ENCODE measurements at regions of chr5 and their contacts with region 1.

Region 1: GRCh38 chr5:39948867-39949468 is 524.2 kb upstream of the DAB2 start:
- DNase-seq: peak; percentile 72
- H3K4me3 ChIP-seq: no peak overlapping the region
- H3K27ac ChIP-seq: no peak overlapping the region
- H3K4me1 ChIP-seq: no peaks in the 10 kb centered on the region
- H3K27me3 ChIP-seq: no peaks in the 10 kb centered on the region
- CTCF ChIP-seq: peak; percentile 60

Region 2: GRCh38 chr5:39714036-39714698 is 234.8 kb before region 1 on chr5:
- intact Hi-C with region 1: loop called (anchors 10 kb)
- DNase-seq: peak; percentile 70
- H3K4me3 ChIP-seq: no peak overlapping the region
- H3K27ac ChIP-seq: no peak overlapping the region
- H3K4me1 ChIP-seq: no peaks in the 10 kb centered on the region
- H3K27me3 ChIP-seq: no peaks in the 10 kb centered on the region
- CTCF ChIP-seq: peak; percentile 72

Region 3: GRCh38 chr5:39835371-39835770 is 113.6 kb before region 1 on chr5:
- intact Hi-C with region 1: no loop called
- DNase-seq: no peak
- H3K4me3 ChIP-seq: no peak overlapping the region
- H3K27ac ChIP-seq: no peak overlapping the region
- H3K4me1 ChIP-seq: no peaks in the 10 kb centered on the region
- H3K27me3 ChIP-seq: no peaks in the 10 kb centered on the region
- CTCF ChIP-seq: no peak

Region 4: DNA sequence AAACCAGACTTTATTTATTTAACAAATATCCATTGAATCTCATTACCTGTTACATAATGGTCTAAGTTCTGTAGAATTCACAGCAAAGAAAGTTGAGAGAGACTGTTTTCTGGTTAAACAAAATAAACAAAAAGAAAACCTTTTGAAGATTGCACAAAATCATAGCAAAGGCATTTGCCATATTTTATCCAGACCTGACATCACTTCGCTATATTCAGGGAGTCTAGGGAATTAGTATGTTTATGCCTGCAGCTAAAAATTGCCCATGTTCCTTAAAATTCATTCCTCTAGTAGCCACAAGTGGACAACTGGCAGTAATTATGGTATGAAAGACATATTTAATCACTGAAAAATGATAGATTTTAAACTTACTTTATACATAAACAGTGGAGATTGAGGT is 52.8 kb after region 1 on chr5:
- intact Hi-C with region 1: no loop called
- DNase-seq: no peak
- H3K4me3 ChIP-seq: no peak overlapping the region
- H3K27ac ChIP-seq: no peak overlapping the region
- H3K4me1 ChIP-seq: no peaks in the 10 kb centered on the region
- H3K27me3 ChIP-seq: no peaks in the 10 kb centered on the region
- CTCF ChIP-seq: no peak

Region 5: DNA sequence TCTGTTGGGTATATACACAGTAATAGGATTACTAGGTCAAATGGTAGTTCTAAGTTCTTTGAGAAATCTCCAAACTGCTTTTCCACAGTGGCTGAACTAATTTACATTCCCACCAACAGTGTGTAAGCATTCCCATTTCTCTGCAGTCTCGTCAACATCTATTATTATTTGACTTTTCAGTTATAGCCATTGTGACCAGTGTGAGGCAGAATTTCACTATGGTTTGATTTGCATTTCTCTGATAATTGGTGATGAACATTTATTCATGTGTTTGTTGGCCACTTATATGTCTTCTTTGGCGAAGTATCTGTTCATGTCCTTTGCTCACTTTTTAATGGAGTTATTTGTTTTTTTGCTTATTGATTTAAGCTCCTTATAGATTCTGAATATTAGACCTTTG is 72.0 kb after region 1 on chr5:
- intact Hi-C with region 1: no loop called
- DNase-seq: no peak
- H3K4me3 ChIP-seq: no peak overlapping the region
- H3K27ac ChIP-seq: no peak overlapping the region
- H3K4me1 ChIP-seq: no peaks in the 10 kb centered on the region
- H3K27me3 ChIP-seq: no peaks in the 10 kb centered on the region
- CTCF ChIP-seq: no peak

Region 6: DNA sequence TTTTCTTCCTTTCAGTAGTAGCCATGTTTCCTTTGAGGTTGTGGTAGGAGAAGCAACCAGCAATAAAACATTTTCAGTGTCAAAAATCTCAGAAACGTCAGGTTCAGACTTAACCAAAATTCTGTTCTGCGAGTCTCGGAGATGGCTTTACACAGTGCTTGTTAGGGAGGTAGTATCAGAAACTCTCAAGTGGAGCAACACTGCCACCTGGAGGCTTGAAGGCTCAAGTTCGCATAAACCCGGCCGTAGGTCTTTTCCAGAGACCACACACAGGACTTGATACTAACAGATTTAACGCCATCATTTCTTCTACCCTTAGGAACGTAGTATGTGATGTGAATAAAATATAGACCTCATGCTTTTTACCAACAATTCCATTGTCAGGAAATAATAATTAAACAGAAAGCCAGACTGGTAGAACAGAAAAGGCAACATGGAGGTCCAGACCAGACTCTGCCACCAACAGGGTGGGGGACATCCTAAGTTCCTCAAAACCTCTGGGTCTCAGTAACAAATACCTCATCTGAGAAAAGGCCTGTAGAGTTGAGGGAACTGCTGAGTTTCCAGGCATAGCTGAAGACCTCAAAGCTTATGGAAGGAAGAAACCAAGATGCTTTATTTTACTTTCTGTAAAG is 739.3 kb after region 1 on chr5:
- intact Hi-C with region 1: loop called (anchors 5 kb)
- DNase-seq: peak; percentile 91
- H3K4me3 ChIP-seq: no peak overlapping the region
- H3K27ac ChIP-seq: peak overlapping the region; percentile 18
- H3K4me1 ChIP-seq: peaks cover 6% of the 10 kb centered on the region
- H3K27me3 ChIP-seq: no peaks in the 10 kb centered on the region
- CTCF ChIP-seq: peak; percentile 74

Region 7: DNA sequence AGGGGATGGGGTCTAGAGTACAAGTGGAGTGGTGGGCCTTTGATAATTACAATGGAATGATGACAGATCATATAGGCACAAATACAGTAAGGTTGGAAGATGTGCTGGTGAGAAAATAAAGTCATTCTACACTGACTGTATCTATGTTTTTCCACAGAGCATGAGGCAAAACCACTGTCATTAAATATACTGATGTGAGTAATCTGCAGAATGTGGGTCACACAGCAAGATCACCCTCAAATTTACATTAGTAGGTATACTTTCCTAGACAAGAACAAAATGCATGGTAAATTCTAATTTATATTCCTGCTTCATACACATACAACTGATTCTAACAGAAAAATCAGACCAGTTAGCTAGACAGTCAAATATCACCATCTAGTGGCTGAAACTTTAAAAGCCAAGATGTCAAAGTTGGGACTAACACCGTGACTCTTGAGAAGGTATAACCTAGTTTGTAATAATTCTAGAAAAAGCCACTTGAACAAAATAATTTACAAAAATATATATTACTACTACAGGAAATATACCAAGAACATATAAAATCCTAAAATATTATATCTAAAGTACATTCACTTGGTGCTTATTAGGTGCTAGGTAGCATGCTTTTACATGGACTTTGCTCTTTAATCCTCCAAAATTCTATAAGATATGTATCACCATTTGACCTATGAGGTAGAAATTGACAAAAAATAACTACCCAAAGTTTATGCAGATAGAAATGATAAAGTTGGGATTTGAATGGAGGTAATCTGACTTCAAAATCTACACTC is 787.3 kb after region 1 on chr5:
- intact Hi-C with region 1: loop called (anchors 5 kb)
- DNase-seq: no peak
- H3K4me3 ChIP-seq: no peak overlapping the region
- H3K27ac ChIP-seq: no peak overlapping the region
- H3K4me1 ChIP-seq: peaks cover 11% of the 10 kb centered on the region
- H3K27me3 ChIP-seq: no peaks in the 10 kb centered on the region
- CTCF ChIP-seq: peak; percentile 70

Measured in colonic mucosa (tissue), 4 donors.